ENCODE measurements at regions of chr15 and their contacts with region 1.

Region 1: DNA sequence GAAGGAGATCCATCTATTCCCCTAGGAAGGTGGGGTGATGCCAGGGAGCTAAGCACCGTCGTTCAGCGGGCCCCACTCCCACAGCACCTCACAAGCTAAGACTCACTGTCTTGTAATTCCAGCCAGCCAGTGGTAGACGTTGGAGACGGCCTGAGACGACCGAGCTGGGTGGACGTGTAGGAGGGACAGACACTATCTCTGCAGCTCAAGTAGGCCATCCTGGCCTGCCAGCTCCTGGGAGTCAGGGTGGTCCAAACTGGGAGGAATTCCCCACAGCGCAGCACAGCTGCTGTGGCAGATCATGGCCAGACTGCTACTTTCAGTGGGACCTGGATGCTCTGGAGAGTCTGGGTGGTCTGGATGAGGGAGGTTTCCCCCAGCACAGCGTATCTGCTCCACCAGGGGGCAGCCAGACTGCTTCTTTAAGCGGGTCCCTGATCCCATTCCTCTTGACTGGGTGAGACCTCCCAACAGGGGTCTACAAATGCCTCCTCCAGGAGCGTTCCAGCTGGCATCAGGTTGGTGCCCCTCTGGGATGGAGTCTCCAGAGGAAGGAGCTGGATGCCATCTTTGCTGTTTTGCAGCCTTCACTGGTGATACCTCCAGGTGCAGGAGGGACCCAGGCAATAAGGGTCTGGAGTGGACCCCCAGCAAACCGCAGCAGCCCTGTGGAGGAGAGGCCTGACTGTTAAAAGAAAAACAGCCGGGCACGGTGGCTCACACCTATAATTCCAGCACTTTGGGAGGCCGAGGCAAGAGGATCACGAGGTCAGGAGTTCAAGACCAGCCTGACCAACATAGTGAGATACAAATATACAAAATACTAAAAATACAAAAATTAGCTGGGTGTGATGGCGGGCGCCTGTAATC is 27.6 kb downstream of the GNB5 start:
- DNase-seq: peak in 1 of 2 donors; percentile 52
- ATAC-seq: peak in 1 of 3 donors; percentile 39
- H3K4me3 ChIP-seq: no peak overlapping the region
- H3K4me3 Mint-ChIP-seq: no peak overlapping the region
- H3K27ac ChIP-seq: no peak overlapping the region
- H3K27ac Mint-ChIP-seq: no peak overlapping the region
- H3K4me1 ChIP-seq: no peaks in the 10 kb centered on the region
- H3K4me1 Mint-ChIP-seq: peaks cover 14 to 21% of the 10 kb centered on the region in 2 donors
- H3K27me3 ChIP-seq: no peaks in the 10 kb centered on the region
- H3K27me3 Mint-ChIP-seq: no peaks in the 10 kb centered on the region
- CTCF ChIP-seq: peak; percentile 14

Region 2: GRCh38 chr15:52124270-52124880 is 39.2 kb before region 1 on chr15:
- intact Hi-C with region 1: no loop called
- DNase-seq: no peak
- ATAC-seq: no peak
- H3K4me3 ChIP-seq: no peak overlapping the region
- H3K4me3 Mint-ChIP-seq: no peak overlapping the region
- H3K27ac ChIP-seq: no peak overlapping the region
- H3K27ac Mint-ChIP-seq: no peak overlapping the region
- H3K4me1 ChIP-seq: no peaks in the 10 kb centered on the region
- H3K4me1 Mint-ChIP-seq: no peaks in the 10 kb centered on the region
- H3K27me3 ChIP-seq: no peaks in the 10 kb centered on the region
- H3K27me3 Mint-ChIP-seq: no peaks in the 10 kb centered on the region
- CTCF ChIP-seq: no peak

Region 3: DNA sequence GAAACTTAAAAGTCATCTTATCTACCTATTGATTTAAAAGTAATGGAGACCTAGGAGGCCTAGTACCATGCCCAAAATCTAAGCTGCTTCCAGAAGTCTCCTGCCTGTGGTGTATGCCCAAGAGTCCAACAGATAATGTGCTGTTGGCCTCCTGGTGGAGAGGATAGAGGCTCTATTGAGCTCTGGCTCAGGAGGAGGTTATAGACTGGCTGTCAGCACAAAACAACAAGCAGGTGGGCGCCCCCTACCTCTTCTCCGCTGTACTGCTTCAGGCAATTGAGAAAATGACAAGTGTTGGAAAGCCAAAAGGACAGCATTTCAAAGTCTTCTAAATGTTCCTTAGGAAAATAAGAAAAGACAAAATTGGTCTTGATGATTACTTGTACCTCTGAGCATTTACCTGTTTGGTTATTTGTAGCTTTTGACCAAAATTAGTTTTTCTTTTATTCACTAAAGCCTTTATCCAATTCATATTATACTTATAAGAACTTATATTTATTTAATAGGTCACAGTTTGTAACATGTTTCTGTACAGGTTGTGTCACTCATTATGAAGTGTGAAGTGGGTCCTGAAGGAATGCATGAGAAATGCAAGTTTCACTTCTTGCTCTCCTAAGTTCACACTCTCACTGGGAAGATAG is 44.9 kb after region 1 on chr15:
- intact Hi-C with region 1: loop called (anchors 1 kb)
- DNase-seq: peak; percentile 51 to 81
- ATAC-seq: peak; percentile 83 to 99 (median 94)
- H3K4me3 ChIP-seq: no peak overlapping the region
- H3K4me3 Mint-ChIP-seq: no peak overlapping the region
- H3K27ac ChIP-seq: no peak overlapping the region
- H3K27ac Mint-ChIP-seq: peak overlapping the region in 1 of 2 donors; percentile 4
- H3K4me1 ChIP-seq: no peaks in the 10 kb centered on the region
- H3K4me1 Mint-ChIP-seq: no peaks in the 10 kb centered on the region
- H3K27me3 ChIP-seq: no peaks in the 10 kb centered on the region
- H3K27me3 Mint-ChIP-seq: peaks cover 0 to 6% of the 10 kb centered on the region in 2 donors
- CTCF ChIP-seq: peak; percentile 77

Region 4: DNA sequence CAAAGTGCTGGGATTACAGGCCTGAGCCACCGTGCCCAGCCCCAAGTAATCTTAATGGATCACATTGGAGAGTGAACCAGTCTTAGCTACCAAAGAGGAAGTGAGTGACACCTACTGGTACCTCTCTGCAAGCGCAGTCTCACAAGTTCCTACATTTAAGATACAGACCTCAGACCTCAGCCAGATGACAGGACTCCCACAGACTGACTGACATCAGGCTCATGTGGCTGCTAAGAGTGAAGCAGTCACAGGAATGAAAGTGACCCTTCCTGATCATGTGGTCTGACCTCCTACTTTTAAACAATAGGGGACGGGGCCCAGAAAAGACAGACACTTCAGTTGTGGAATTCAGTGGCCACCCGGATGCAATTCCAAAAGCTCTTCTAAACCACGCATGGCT is 63.9 kb after region 1 on chr15:
- intact Hi-C with region 1: loop called (anchors 1 kb)
- DNase-seq: peak; percentile 28 to 88
- ATAC-seq: peak; percentile 92 to 100 (median 99)
- H3K4me3 ChIP-seq: no peak overlapping the region
- H3K4me3 Mint-ChIP-seq: no peak overlapping the region
- H3K27ac ChIP-seq: peak overlapping the region; percentile 24
- H3K27ac Mint-ChIP-seq: no peak overlapping the region
- H3K4me1 ChIP-seq: peaks cover 13% of the 10 kb centered on the region
- H3K4me1 Mint-ChIP-seq: peaks cover 0 to under 1% of the 10 kb centered on the region in 2 donors
- H3K27me3 ChIP-seq: no peaks in the 10 kb centered on the region
- H3K27me3 Mint-ChIP-seq: peaks cover 0 to 4% of the 10 kb centered on the region in 2 donors
- CTCF ChIP-seq: peak; percentile 79